Endothelial cell of umbilical vein (primary cell): ENCODE measurements at regions of chr3 and their contacts with region 1.

Region 1: DNA sequence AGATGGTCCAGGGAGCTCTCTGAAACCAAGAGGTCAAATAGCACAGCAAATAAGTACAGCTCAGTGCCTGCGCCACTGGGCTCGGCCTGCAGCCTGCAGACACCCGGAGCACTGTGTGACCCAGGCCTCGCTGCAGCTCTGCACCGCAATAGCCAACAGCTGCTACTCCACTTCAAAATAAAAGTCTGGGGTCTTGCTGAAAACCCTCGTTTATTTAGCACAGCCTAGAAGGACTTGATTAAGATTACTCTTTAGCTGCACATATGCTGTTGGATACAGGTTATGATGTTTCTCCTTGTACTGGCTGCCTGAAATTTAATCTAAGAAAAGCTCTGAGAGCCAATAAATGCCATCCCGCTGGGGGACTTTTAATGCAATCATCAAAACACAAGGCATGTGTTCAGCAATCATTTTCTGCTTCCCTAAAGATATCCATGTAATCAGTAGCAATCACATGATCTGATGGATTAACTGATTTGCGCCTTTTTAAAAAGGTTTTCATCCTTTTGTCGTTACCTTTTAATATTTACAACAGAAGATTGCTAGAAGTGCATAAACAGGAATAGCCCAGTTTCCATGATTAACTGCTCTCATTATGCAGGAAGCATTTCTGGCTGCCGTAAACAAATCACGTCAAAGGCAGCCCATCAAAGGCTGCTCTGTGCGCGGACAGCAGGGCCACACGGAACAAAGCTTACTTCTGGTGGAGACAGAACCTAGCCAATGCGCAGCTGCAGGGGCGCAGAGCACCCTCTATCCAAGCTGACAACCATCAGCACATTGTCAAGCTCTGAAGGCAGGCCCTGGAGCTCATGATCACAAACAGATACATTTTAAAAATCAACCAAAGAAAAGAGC is 58.8 kb downstream of the CLASP2 start:
- DNase-seq: peak; percentile 89
- H3K4me3 ChIP-seq: peak overlapping the region; percentile 7 to 57 (median 11)
- H3K27ac ChIP-seq: peak overlapping the region; percentile 39
- H3K4me1 ChIP-seq: peaks cover 36% of the 10 kb centered on the region
- H3K27me3 ChIP-seq: no peaks in the 10 kb centered on the region
- CTCF ChIP-seq: no peak
- POLR2A ChIP-seq: no peak

Region 2: GRCh38 chr3:33645060-33645647 is 14.1 kb before region 1 on chr3:
- CTCF ChIA-PET with region 1: interaction called, 13 read pairs
- POLR2A ChIA-PET with region 1: interaction called, 3 read pairs
- dilution Hi-C with region 1: no loop called
- intact Hi-C with region 1: no loop called
- DNase-seq: peak; percentile 41
- H3K4me3 ChIP-seq: peak overlapping the region in 2 of 3 experiments; percentile 19 to 36
- H3K27ac ChIP-seq: no peak overlapping the region
- H3K4me1 ChIP-seq: no peaks in the 10 kb centered on the region
- H3K27me3 ChIP-seq: no peaks in the 10 kb centered on the region
- CTCF ChIP-seq: no peak
- POLR2A ChIP-seq: no peak

Region 3: DNA sequence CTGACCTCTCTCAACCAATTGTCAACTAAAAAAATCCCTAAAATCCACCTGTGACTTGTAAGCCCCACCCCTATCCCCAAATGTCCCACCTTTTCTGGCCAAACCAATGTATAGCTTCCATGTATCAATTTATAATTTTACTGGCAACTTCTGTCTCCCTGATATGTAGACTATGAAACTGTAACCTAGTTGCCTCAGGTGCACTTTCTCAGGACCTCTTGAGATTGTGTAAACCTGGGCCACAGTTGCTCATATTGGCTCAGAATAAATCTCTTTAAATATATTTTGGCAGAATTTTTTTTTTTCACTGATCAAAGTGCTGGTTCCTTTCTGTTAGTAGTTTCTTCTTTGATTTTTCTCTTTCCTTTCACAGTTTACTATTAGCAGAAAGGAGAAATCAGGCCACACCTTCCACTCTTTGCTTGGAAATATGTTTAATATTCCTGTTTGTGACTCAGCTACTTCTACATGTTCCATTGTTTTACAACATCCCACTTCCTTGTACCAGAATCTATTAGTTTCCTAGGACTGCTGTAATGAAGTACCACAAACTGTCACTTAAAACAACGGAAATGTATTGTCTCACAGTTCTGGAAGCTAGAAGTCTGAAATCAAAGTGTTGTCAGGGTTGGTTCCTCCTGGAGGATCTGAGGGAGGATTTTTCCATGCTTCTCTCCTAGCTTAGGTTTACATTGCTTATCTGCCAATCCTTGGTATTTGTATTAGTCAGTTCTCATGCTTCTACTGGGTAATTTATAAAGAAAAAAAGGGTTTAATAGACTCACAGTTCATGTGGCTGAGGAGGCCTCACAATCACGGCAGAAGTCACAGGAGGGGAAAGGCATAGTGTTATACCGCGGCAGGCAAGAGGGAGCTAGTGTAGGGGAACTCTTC is 1178.9 kb after region 1 on chr3:
- CTCF ChIA-PET with region 1: no interaction called
- POLR2A ChIA-PET with region 1: no interaction called
- dilution Hi-C with region 1: no loop called
- intact Hi-C with region 1: no loop called
- DNase-seq: no peak
- H3K4me3 ChIP-seq: no peak overlapping the region
- H3K27ac ChIP-seq: no peak overlapping the region
- H3K4me1 ChIP-seq: no peaks in the 10 kb centered on the region
- H3K27me3 ChIP-seq: no peaks in the 10 kb centered on the region
- CTCF ChIP-seq: no peak
- POLR2A ChIP-seq: no peak